Lower leg skin (tissue), 4 donors: ENCODE measurements at regions of chr1 and their contacts with region 1.

Region 1: DNA sequence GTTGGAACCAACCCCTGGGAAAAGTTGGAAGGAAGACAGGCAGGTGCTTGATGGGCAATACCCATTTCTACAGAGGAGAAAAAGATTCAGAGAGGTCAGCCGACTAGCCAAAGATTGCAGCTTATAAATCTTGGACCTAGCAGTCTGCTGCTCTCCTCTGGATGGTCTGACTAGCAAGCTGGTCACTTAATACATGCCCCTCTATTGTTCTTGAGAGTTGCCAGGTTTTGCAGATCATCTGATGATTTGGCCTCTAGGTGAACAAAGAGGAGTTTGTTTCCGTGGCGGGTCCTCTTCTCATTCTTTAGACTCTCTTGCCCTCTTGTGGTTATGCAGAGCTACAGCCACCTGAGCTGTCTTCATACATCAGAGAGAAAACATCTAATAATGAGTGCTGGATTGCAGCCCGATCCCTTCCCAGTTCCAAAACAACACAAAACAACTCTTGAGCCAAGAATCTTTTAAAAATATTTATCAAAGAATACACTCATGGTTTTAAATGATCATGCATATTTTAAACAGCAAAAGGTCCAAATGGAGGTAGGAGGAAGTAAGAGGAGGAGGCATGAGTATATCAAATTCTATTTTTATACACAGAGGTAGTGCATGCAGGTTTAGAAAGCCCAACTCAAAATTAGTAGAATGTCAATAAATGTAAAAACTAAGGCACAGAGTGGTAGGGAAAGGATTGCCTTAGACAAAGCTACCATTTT is 115.7 kb downstream of the SLC30A10 start:
- DNase-seq: peak in 1 of 2 donors; percentile 21
- H3K4me3 ChIP-seq: no peak overlapping the region
- CTCF ChIP-seq: peak in 1 of 3 donors; percentile 42
- POLR2A ChIP-seq: no peak

Region 2: DNA sequence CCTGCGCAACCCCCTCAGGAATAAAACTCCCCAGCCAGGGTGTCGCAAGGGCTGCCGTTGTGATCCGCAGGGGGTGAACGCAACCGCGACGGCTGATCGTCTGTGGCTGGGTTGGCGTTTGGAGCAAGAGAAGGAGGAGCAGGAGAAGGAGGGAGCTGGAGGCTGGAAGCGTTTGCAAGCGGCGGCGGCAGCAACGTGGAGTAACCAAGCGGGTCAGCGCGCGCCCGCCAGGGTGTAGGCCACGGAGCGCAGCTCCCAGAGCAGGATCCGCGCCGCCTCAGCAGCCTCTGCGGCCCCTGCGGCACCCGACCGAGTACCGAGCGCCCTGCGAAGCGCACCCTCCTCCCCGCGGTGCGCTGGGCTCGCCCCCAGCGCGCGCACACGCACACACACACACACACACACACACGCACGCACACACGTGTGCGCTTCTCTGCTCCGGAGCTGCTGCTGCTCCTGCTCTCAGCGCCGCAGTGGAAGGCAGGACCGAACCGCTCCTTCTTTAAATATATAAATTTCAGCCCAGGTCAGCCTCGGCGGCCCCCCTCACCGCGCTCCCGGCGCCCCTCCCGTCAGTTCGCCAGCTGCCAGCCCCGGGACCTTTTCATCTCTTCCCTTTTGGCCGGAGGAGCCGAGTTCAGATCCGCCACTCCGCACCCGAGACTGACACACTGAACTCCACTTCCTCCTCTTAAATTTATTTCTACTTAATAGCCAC is 1466.8 kb before region 1 on chr1:
- intact Hi-C with region 1: loop called (anchors 10 kb)
- DNase-seq: peak; percentile 66 to 95
- H3K4me3 ChIP-seq: peak overlapping the region; percentile 60
- CTCF ChIP-seq: no peak
- POLR2A ChIP-seq: no peak